ENCODE measurements at regions of chr7 and their contacts with region 1.

Region 1: GRCh38 chr7:2037808-2038522 is 194.8 kb downstream of the MAD1L1 start:
- DNase-seq: peak; percentile 50
- ATAC-seq: peak; percentile 75
- H3K4me3 Mint-ChIP-seq: peak overlapping the region; percentile 82
- H3K27ac Mint-ChIP-seq: peak overlapping the region; percentile 86
- H3K4me1 Mint-ChIP-seq: peaks cover 48% of the 10 kb centered on the region
- H3K27me3 Mint-ChIP-seq: no peaks in the 10 kb centered on the region

Region 2: GRCh38 chr7:1940402-1940786 is 97.6 kb before region 1 on chr7:
- POLR2A ChIA-PET with region 1: interaction called, 14 read pairs
- DNase-seq: peak; percentile 91
- ATAC-seq: peak; percentile 84
- H3K4me3 Mint-ChIP-seq: peak overlapping the region; percentile 90
- H3K27ac Mint-ChIP-seq: peak overlapping the region; percentile 96
- H3K4me1 Mint-ChIP-seq: peaks cover 42% of the 10 kb centered on the region
- H3K27me3 Mint-ChIP-seq: peaks cover 4% of the 10 kb centered on the region

Region 3: DNA sequence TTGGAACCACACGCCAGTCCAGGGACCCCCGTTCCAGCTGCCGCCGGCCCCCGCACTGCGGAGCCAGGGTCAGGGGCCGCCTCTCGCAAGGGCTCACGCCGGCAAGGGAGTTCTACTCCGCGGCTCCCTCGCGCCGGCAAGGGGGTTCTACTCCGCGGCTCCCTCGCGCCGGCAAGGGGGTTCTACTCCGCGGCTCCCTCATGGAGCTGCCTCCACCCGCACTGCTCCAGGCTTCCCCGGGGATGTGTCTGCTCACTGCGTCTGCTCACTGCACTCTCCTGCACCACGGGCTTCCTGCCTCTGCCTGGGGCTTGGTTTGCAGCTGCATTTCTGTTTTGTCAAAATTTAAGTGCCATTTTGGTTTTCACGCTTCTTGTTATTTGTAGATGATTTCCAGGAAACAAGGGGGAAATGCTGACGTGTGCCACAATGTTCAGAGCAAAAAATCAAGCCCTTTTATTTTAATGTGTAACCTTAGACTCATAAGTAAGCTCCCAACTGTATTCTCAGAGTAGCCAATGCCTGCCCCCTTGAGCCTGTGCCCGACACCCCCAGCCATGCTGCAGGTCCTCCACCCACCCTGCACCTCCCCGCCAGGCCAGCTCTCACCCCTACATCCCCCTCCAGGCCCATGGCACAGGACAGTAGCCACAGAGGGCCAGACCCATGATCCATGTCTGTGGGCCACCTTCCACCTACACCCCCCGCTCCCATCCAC is 51.4 kb before region 1 on chr7:
- POLR2A ChIA-PET with region 1: interaction called, 12 read pairs
- DNase-seq: peak; percentile 60
- ATAC-seq: peak; percentile 91
- H3K4me3 Mint-ChIP-seq: peak overlapping the region; percentile 77
- H3K27ac Mint-ChIP-seq: peak overlapping the region; percentile 95
- H3K4me1 Mint-ChIP-seq: peaks cover 24% of the 10 kb centered on the region
- H3K27me3 Mint-ChIP-seq: no peaks in the 10 kb centered on the region

Measured in activated naive CD8-positive, alpha-beta T cell treated with anti-CD3 and anti-CD28 coated beads, Interleukin-2, amount 10 ng/mL, durations not matched to agents 7 days and 5 days (primary cell).